Breast epithelium (tissue), 4 donors: ENCODE measurements at regions of chr13 and their contacts with region 1.

Region 1: DNA sequence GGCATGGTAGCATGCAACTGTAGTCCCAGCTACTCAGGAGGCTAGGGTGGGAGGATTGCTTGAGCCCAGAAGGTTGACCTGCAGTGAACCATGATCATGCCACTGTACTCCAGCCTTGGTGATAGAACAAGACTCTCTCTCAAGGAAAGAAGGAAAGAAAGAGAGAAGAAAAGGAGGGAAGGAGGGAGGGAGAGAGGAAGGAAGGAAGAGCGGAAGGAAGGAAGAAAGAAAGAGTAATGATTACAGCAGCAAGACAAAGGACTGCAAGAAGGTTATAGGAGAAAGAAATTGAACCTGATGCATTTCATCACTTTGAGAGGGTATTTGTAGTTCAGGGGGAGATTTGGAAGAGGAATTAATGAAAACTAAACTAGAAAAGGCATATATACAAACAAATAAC is 155.7 kb downstream of the LACC1 start:
- DNase-seq: no peak
- H3K4me3 ChIP-seq: no peak overlapping the region
- H3K27ac ChIP-seq: no peak overlapping the region
- H3K4me1 ChIP-seq: no peaks in the 10 kb centered on the region
- H3K27me3 ChIP-seq: no peaks in the 10 kb centered on the region
- CTCF ChIP-seq: no peak
- POLR2A ChIP-seq: no peak

Region 2: DNA sequence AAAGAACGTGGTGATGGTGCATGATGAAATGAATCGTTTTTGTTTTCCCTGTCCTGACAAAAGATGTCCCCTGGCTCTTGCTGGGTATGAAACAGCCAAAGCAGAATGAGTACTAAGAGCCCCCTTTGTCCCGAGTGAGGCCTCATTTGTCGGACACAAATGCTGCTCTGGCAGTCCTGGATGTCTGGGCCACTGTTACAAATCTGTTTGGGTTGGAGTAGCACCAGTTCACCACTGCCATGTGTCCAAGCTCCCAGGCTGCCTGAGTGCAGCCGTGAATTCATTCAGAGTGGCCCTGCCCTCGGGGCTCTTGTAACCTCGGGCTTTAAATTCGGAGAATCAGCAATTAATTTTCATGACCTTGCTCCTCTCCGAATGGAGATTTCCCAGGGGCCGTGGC is 771.4 kb after region 1 on chr13:
- intact Hi-C with region 1: loop called (anchors 5 kb)
- DNase-seq: no peak
- H3K4me3 ChIP-seq: no peak overlapping the region
- H3K27ac ChIP-seq: no peak overlapping the region
- H3K4me1 ChIP-seq: no peaks in the 10 kb centered on the region
- H3K27me3 ChIP-seq: no peaks in the 10 kb centered on the region
- CTCF ChIP-seq: no peak
- POLR2A ChIP-seq: no peak